Caco-2 (cell line): ENCODE measurements at regions of chr18 and their contacts with region 1.

Region 1: DNA sequence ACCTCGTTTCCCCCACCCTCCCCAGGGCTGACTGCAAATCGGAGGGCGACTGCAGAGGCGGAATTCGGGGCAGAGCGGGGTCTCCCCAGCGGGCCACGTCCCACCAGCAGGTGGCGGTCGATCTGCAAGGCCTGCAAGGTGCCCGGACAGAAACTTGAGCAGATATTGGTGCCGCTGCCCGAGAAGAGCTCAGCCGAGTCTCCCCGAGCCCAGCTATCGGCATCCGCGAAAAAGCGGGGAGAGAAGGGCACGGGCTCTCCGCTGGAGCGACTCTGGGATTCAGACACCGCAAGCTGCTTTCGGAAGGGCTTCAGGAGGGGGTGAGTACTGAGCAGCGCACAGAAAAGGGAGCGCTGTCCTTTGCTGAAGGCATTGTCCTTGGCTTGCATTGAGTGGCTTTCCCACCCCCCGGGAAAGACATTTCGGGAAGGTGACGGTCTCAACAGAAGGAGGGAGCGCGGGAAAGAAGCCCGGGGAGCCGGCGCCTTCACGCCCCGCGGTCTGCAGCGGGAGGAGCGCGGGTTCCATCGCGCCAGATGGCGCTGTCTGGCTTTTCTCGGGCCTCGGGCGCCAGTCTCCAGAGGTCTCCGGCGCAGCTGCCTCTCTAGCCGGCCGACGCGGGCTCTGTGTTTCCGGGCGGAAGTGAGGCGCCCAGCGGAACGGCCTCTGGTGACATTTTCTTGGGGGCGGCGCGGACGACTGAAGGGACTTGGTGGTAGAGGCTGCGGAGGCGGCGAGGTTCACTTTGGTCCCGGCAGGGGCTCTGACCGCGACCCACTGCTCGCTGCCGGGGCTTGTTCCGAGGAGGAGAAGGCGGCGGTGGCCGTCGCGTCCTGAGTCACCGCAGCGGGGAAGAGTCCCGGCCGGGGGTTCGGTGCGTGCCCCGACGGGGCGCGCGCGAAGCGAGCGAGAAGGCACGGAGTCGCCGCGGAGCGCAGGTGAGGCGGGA is 69.5 kb downstream of the HAUS1 start:
- DNase-seq: peak; percentile 85
- H3K4me3 ChIP-seq: peak overlapping the region; percentile 80
- H3K4me3 Mint-ChIP-seq: peak overlapping the region; percentile 97
- H3K27ac Mint-ChIP-seq: peak overlapping the region; percentile 94
- H3K4me1 ChIP-seq: no peaks in the 10 kb centered on the region
- H3K4me1 Mint-ChIP-seq: peaks cover 4% of the 10 kb centered on the region
- H3K27me3 ChIP-seq: no peaks in the 10 kb centered on the region
- H3K27me3 Mint-ChIP-seq: no peaks in the 10 kb centered on the region
- CTCF ChIP-seq: peak; percentile 55 to 83

Region 2: GRCh38 chr18:46148810-46149209 is 24.9 kb before region 1 on chr18:
- CTCF ChIA-PET with region 1: interaction called, 3 read pairs
- POLR2A ChIA-PET with region 1: no interaction called
- intact Hi-C with region 1: loop called (anchors 2 kb)
- DNase-seq: peak; percentile 35 to 58
- H3K4me3 ChIP-seq: no peak overlapping the region
- H3K4me3 Mint-ChIP-seq: no peak overlapping the region
- H3K27ac Mint-ChIP-seq: no peak overlapping the region
- H3K4me1 ChIP-seq: no peaks in the 10 kb centered on the region
- H3K4me1 Mint-ChIP-seq: peaks cover 5% of the 10 kb centered on the region
- H3K27me3 ChIP-seq: no peaks in the 10 kb centered on the region
- H3K27me3 Mint-ChIP-seq: no peaks in the 10 kb centered on the region
- CTCF ChIP-seq: peak; percentile 28 to 33

Region 3: GRCh38 chr18:46213295-46213694 is 39.6 kb after region 1 on chr18:
- CTCF ChIA-PET with region 1: interaction called, 3 read pairs
- POLR2A ChIA-PET with region 1: no interaction called
- intact Hi-C with region 1: loop called (anchors 5 kb)
- DNase-seq: no peak
- H3K4me3 ChIP-seq: no peak overlapping the region
- H3K4me3 Mint-ChIP-seq: no peak overlapping the region
- H3K27ac Mint-ChIP-seq: no peak overlapping the region
- H3K4me1 ChIP-seq: no peaks in the 10 kb centered on the region
- H3K4me1 Mint-ChIP-seq: no peaks in the 10 kb centered on the region
- H3K27me3 ChIP-seq: no peaks in the 10 kb centered on the region
- H3K27me3 Mint-ChIP-seq: no peaks in the 10 kb centered on the region
- CTCF ChIP-seq: peak in 1 of 2 experiments; percentile 34